ENCODE measurements at regions of chr17 and their contacts with region 1.

Region 1: GRCh38 chr17:49227436-49228261 is 2.9 kb downstream of the PHOSPHO1 start:
- DNase-seq: peak; percentile 57 to 94 (median 77)

Region 2: DNA sequence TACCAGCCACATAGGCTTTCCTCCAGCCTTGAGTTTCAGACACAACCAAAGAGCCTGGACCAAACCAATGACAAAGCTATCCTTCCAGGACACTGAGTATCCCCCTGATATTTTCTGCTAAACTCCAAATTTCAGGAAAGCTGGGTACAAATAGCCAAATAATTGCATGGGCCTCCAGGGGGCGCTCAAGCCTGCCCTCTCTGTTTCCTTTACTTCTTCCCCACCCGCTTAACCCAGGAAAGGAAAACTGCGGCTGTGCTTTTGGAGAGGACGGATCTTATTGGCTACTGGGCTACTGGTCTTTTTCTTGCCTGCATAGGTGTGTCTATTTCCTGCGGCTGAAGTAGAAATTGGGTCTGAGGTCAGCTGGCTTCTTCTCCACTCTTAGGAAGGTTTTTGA is 47.3 kb before region 1 on chr17:
- intact Hi-C with region 1: loop called (anchors 2 kb)
- DNase-seq: peak in 6 of 10 donors; percentile 20 to 87 (median 49)

Region 3: DNA sequence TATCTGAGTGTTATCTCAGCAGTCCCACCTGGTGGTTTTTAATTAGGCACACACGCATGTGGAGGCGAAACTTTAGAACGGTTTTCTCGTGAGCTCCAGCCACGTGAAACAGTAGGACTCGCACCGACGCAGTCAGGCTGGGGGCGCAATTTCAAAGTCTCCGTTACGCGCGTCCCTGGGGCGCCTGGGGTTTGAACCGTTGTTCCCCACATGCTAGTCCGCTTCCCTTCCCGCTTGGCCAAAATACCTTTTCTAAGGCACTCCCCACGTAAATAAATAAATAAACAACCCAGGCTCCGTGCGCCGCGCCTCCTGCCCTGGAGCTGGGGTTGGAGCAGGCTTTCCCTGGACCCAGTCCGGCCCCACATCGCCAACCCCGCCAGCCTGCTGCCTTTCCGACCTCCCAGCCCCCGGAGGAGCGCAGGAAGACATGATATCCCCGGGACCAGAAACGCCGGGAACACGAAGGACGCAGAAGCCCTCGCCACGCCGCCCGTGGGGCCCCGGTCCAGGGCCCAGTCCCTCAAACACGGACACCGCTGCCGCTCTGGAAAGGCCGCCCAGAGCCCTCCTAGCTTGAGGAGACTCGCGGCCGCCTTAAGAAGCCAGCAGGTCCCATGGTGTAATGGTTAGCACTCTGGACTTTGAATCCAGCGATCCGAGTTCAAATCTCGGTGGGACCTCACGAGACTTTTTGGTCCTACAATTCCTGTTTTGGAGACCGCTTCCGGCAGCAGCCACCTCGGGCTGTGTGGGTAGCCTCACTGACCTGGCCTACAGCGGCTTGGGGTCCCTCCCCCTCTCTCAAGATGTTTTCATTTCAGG is 35.5 kb before region 1 on chr17:
- intact Hi-C with region 1: loop called (anchors 5 kb)
- DNase-seq: peak; percentile 88 to 99 (median 91)

Region 4: DNA sequence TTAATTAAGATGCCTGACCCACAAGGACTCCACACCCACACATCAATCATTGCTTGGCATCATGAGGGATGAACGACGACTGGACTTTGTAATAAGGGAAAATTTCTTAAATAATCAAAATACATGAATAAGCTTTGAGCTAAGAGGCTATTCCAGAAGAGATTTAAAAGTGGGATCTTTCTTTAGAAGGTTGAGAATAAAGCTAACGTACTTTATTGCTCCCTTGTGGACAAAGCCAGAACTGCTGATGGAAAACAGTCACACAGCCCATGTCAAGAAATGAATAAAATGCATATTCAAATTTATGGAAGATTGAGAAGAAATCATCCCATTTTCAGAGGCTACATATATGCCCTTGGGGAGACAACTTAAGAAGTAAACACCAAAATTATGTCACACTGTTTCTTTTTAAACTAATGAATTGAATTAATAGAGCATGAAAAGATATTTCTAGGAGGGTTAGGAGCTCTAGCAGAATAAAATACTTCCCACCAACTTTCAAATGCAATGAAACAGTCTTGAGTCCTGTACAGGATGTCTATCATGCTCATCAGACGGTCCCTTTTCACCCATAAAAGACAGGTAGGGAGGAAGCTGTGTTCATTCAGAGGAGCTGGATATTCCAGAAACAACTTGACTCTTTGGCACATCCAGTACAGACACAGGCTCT is 63.2 kb after region 1 on chr17:
- intact Hi-C with region 1: loop called (anchors 10 kb)
- DNase-seq: no peak

Region 5: DNA sequence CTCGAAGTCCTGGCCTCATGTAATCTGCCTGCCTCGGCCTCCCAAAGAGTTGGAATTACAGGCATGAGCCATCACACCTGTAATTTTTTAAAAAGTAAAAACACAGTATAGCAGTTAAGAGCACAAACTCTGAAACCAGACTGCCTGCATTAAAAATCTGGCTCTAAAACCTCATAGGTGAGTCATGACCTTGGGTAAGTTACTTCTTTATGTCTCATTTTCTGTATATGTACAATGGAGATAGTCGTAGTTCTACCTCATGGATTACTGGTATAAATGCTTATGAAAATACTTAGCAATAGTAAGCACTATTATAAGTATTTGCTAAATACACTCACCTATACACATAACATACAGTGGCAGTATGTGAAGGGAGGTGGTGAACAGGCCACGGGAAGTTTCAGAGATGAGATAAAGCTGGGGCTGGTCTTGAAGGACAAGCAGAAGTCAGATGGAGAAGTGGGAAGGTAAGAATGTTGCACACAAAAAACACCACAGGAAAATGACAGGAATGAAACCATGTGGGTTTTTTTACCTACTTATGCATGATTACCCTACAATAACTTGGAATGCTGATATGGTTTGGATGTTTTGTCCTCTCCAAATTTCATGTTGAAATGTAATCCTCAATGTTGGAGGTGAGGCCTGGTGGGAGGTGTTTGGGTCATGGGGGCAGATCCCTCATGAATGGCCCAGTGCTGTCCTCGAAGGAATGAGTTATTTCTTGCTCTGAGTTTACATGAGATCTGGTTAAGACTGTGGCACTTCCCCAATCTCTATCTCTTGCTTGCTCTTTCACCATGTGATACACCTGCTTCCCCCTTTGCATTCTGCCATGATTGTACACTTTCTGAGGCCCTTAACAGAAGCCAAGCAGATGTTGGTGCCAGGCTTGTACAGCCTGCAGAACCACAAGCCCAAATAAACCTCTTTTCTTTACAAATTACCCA is 100.5 kb after region 1 on chr17:
- intact Hi-C with region 1: no loop called
- DNase-seq: no peak